GM12878 (cell line): ENCODE measurements at regions of chr2 and their contacts with region 1.

Region 1: DNA sequence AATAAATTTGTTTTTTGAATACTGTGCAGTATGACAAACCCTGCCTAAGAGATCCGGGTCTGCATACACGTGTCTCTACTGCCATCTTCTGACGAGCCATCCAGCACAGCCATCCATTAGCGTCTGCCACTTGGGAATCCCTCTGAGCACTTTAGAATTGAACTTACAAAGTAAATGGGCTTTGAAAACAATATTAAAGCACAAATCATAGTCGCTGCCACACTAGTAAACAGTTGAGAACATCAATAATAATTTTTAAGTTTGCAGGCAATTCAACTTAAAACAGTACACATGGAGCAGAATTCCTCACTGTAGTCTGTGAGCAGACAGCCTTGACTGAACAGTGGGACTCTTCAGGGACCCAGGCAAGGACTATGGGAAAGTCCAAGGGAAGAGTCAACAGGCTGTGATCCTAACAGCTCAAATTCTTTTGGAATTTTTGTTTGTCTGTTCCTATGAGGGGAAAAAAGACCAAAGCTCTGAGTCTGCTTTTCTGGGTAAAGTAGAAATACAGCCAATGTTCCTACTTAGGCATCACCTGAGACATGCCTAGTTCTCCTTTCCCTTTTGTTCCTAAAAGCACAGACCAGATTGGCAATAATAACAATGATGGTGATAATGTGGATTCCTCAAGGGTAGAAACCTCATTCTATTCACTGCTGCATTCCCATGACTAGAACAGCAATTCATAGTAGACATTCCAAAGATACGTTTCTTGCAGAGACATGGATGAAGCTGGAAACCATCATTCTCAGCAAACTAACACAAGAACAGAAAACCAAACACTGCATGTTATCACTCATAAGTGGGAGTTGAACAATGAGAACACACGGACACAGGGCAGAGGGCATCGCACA is 92.9 kb downstream of the MREG start:
- DNase-seq: no peak
- ATAC-seq: peak; percentile 75
- H3K4me3 ChIP-seq: no peak overlapping the region
- H3K27ac ChIP-seq: no peak overlapping the region
- H3K4me1 ChIP-seq: peaks cover 25% of the 10 kb centered on the region
- H3K27me3 ChIP-seq: no peaks in the 10 kb centered on the region
- CTCF ChIP-seq: peak; percentile 89 to 93 (median 91); a peak in 5 of 6 replicates
- EP300 ChIP-seq: no peak
- POLR2A ChIP-seq: no peak
- RAD21 ChIP-seq: peak; percentile 95

Region 2: GRCh38 chr2:215269397-215270119 is 650.9 kb before region 1 on chr2:
- CTCF ChIA-PET with region 1: interaction called, 14 read pairs
- POLR2A ChIA-PET with region 1: interaction called, 8 read pairs
- RAD21 ChIA-PET with region 1: no interaction called
- SMC1A ChIA-PET with region 1: interaction called, 9 read pairs
- in situ Hi-C with region 1: no loop called
- intact Hi-C with region 1: loop called (anchors 5 kb)
- DNase-seq: peak; percentile 40
- ATAC-seq: peak; percentile 77
- H3K4me3 ChIP-seq: no peak overlapping the region
- H3K27ac ChIP-seq: no peak overlapping the region
- H3K4me1 ChIP-seq: peaks cover 4% of the 10 kb centered on the region; the same call in 1 of the 2 replicates
- H3K27me3 ChIP-seq: no peaks in the 10 kb centered on the region
- CTCF ChIP-seq: peak; percentile 69 to 73 (median 69)
- EP300 ChIP-seq: no peak
- POLR2A ChIP-seq: no peak
- RAD21 ChIP-seq: peak; percentile 81

Region 3: GRCh38 chr2:215619022-215619958 is 301.2 kb before region 1 on chr2:
- CTCF ChIA-PET with region 1: no interaction called
- POLR2A ChIA-PET with region 1: no interaction called
- RAD21 ChIA-PET with region 1: no interaction called
- SMC1A ChIA-PET with region 1: interaction called, 4 read pairs
- in situ Hi-C with region 1: no loop called
- intact Hi-C with region 1: loop called (anchors 5 kb)
- DNase-seq: no peak
- ATAC-seq: peak; percentile 88
- H3K4me3 ChIP-seq: no peak overlapping the region
- H3K27ac ChIP-seq: no peak overlapping the region
- H3K4me1 ChIP-seq: no peaks in the 10 kb centered on the region
- H3K27me3 ChIP-seq: no peaks in the 10 kb centered on the region
- CTCF ChIP-seq: no peak
- EP300 ChIP-seq: no peak
- POLR2A ChIP-seq: no peak
- RAD21 ChIP-seq: no peak

Region 4: DNA sequence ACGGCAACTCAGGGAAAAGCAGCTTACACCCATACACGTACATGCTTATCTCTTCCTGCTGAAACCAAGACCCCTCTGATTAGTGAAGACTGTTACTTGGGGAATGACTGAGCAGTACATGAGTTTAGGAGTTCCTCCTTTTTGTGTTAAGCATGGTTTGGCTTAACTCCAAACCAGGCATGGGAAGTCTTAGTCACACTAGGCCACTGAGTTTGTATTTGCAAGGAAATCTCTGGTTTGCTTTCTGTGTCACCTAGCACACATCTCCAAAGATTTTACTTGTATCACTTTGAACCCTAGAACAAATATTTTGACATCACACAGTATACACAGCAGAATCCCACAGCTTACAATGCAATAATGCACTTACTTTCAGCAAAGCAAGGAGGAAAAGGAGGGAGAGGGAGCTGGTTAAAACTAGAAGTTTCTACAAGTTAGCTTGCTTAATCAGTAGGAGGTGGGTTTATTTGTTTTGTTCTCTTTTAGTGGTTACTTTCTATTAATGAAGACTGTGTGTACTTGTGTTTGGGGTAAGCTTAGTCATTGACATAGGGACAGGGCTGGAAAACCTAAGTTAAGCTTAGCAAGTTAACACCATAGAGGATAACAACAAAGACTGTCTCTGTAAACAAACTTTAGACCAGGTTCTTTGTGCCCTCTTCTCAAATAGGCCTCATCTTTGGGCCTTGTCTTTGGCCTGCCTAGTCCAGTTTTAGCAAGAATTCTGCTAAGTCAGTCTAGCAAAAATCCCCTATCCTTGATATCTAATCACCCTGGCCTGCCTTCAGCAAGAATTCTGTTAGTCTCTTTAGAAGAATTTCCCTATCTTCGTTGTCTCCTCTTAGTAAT is 126.5 kb before region 1 on chr2:
- CTCF ChIA-PET with region 1: interaction called, 11 read pairs
- POLR2A ChIA-PET with region 1: no interaction called
- RAD21 ChIA-PET with region 1: interaction called, 7 read pairs
- SMC1A ChIA-PET with region 1: interaction called, 5 read pairs
- in situ Hi-C with region 1: no loop called
- intact Hi-C with region 1: no loop called
- DNase-seq: peak; percentile 56
- ATAC-seq: peak; percentile 67
- H3K4me3 ChIP-seq: no peak overlapping the region
- H3K27ac ChIP-seq: no peak overlapping the region
- H3K4me1 ChIP-seq: peaks cover 5% of the 10 kb centered on the region; the same call in 1 of the 2 replicates
- H3K27me3 ChIP-seq: no peaks in the 10 kb centered on the region
- CTCF ChIP-seq: no peak
- EP300 ChIP-seq: no peak
- POLR2A ChIP-seq: no peak
- RAD21 ChIP-seq: no peak

Region 5: GRCh38 chr2:215843579-215843978 is 76.9 kb before region 1 on chr2:
- CTCF ChIA-PET with region 1: interaction called, 5 read pairs
- POLR2A ChIA-PET with region 1: interaction called, 4 read pairs
- RAD21 ChIA-PET with region 1: interaction called, 20 read pairs
- SMC1A ChIA-PET with region 1: interaction called, 41 read pairs
- in situ Hi-C with region 1: no loop called
- intact Hi-C with region 1: loop called (anchors 1 kb)
- DNase-seq: no peak
- ATAC-seq: no peak
- H3K4me3 ChIP-seq: no peak overlapping the region
- H3K27ac ChIP-seq: no peak overlapping the region
- H3K4me1 ChIP-seq: peaks cover 42% of the 10 kb centered on the region
- H3K27me3 ChIP-seq: no peaks in the 10 kb centered on the region
- CTCF ChIP-seq: no peak
- EP300 ChIP-seq: no peak
- POLR2A ChIP-seq: no peak
- RAD21 ChIP-seq: no peak